ENCODE measurements at regions of chr2 and their contacts with region 1.

Region 1: DNA sequence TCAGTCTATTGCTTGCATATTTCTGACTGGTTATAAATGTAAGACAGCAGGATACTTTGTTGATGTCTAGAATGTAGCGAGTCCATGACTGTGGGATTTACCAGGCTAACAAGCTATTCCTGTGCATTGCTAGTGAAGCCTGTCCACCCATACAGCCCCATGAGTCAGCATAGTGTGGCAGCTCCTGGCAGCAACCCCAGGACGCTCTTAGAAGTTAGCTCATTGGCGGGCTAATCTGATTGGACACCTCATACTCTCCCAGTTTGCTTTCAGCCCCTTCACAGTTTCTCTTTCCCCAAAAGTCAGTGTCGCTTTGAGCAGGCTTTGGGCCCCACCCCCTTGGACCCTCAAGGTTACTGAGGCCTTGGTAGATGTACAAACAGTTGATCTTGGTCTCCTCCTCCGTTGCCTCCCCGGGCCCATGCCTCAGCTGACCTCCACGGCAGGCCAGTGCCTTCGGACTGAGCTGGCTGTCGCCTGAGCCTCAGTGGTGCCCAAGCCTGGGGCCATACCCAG is 48.0 kb downstream of the COA5 start:
- DNase-seq: peak; percentile 61
- ATAC-seq: peak; percentile 88 to 89

Region 2: DNA sequence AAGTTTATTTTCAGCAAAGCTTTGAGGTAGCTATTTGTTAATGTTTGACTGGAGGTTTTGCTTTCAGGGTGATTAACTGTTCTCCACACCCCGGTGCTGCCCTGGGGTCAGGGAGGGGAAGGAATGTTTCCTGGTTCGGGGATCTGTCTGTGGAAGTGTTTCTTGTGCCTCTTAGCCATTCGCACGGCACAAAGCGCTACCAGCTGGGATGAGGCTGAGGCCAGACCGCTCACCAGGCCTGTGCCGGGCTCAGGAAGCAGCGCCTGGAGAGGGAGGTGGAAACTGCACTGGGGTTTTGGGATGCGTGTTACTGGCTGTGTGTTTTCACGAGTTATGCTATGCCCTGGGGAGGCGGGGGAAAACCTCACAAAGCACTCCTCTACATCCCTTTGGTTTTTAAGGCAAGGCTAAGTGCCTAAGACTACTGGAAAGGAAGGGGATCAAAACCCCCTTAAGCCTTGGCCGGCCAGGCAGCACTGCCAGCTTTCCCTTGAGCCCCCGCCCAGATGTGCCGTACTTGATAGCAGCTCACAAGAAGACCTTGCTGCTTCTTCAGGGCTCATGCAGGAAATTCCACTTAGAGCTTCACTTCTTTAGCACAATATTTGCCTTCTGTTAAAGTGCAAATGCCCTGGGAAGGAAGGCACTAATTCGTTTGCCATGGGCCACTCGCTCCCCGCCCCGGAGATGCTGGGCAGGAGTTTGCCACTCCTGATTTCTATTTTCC is 279.8 kb before region 1 on chr2:
- intact Hi-C with region 1: no loop called
- DNase-seq: no peak
- ATAC-seq: no peak

Region 3: DNA sequence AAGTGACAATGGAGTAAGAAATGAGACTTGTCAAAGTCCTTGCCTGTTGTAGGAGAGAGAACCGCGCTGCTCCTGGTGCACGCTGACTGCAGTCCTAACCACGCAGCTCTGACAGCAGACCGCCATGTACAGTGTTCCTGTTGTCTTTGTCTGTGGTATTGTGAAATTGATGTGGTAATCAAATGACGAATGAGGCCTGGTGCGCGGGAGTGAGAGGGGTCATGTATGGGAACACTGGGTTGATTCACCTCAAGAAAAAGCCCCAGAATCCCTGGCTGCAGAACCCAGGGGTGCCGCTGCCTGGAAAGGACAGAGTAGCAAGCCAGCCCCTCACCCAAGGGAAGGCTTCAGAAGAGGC is 51.6 kb before region 1 on chr2:
- intact Hi-C with region 1: loop called in 1 of 2 experiments (anchors 5 kb)
- DNase-seq: peak; percentile 65
- ATAC-seq: peak; percentile 67 to 70

Region 4: DNA sequence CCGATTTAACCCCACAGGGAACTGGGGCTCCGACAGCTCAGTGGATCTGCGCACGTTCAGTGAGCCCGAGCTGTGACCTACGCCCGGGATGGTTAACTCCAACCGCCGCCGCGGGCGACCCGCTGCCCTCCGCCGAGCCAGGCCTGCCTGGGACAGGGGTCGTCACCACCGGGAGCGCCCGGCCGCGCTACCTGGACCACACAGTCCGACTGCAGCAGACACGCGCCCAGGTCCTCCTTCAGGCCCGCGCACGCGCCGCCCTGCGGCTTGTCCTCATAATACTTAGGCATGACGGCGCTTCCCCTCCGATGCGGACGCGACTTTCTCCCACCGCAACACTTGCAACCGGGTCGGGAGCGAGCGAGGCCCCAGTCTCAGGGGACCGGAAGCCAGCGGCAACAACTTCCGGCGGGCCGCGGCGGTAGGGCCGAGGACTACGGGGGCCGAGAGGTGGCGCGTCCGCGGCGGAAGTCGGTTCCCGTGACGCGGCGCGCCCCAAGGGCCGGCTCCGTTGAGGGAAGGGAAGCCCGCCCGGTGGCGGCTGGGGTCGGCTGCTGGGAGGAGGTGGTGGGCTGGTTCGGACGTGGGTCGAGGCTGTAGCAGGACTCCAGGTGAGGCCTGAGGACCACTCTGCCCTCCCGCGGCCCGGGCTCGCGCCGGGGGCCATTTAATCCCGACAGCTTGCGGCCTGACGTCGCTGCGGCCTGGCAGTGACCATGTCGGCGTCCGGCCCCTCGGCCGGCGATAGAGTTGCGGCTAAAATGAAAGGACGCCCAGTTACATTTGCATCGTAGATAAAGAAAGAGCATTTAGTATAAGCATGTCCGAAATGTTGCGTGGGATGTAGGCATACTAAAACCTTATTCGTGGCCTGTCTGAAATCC is 48.0 kb after region 1 on chr2 and contains the starts of genes COA5 and UNC50:
- intact Hi-C with region 1: loop called in 1 of 2 experiments (anchors 5 kb)
- DNase-seq: peak; percentile 93
- ATAC-seq: peak; percentile 97 to 98
- total RNA-seq, gene COA5: 23.1 to 23.7 TPM
- total RNA-seq, gene UNC50: 28.3 to 33.7 TPM

Measured in left cardiac atrium (tissue), 4 donors.